IMR-90 (cell line): ENCODE measurements at regions of chr1 and their contacts with region 1.

Region 1: GRCh38 chr1:245512980-245513578 is 358.3 kb downstream of the KIF26B start:
- DNase-seq: no peak
- ATAC-seq: no peak
- H3K4me3 ChIP-seq: no peak overlapping the region
- H3K27ac ChIP-seq: no peak overlapping the region
- H3K4me1 ChIP-seq: peaks cover 2% of the 10 kb centered on the region; the same call in 1 of the 2 replicates
- H3K27me3 ChIP-seq: no peaks in the 10 kb centered on the region
- CTCF ChIP-seq: no peak
- POLR2A ChIP-seq: no peak
- RAD21 ChIP-seq: no peak

Region 2: GRCh38 chr1:245079021-245079609 is 434.0 kb before region 1 on chr1:
- CTCF ChIA-PET with region 1: no interaction called
- POLR2A ChIA-PET with region 1: no interaction called
- dilution Hi-C with region 1: no loop called
- in situ Hi-C with region 1: no loop called
- intact Hi-C with region 1: loop called (anchors 10 kb)
- DNase-seq: peak; percentile 77
- ATAC-seq: peak; percentile 69
- H3K4me3 ChIP-seq: no peak overlapping the region
- H3K27ac ChIP-seq: no peak overlapping the region
- H3K4me1 ChIP-seq: peaks cover 2% of the 10 kb centered on the region; the same call in 1 of the 2 replicates
- H3K27me3 ChIP-seq: no peaks in the 10 kb centered on the region
- CTCF ChIP-seq: peak; percentile 94
- POLR2A ChIP-seq: no peak
- RAD21 ChIP-seq: peak; percentile 92

Region 3: GRCh38 chr1:245546875-245547274 is 33.8 kb after region 1 on chr1:
- CTCF ChIA-PET with region 1: no interaction called
- POLR2A ChIA-PET with region 1: no interaction called
- dilution Hi-C with region 1: no loop called
- in situ Hi-C with region 1: no loop called
- intact Hi-C with region 1: no loop called
- DNase-seq: no peak
- ATAC-seq: no peak
- H3K4me3 ChIP-seq: no peak overlapping the region
- H3K27ac ChIP-seq: no peak overlapping the region
- H3K4me1 ChIP-seq: no peaks in the 10 kb centered on the region
- H3K27me3 ChIP-seq: 0 out of 2 replicates have a peak, but pooled peaks cover 2% of the 10 kb centered on the region
- CTCF ChIP-seq: no peak
- POLR2A ChIP-seq: no peak
- RAD21 ChIP-seq: no peak

Region 4: GRCh38 chr1:245874942-245875580 is 362.0 kb after region 1 on chr1:
- CTCF ChIA-PET with region 1: no interaction called
- POLR2A ChIA-PET with region 1: no interaction called
- dilution Hi-C with region 1: no loop called
- in situ Hi-C with region 1: no loop called
- intact Hi-C with region 1: loop called (anchors 10 kb)
- DNase-seq: peak; percentile 100
- ATAC-seq: peak; percentile 74
- H3K4me3 ChIP-seq: no peak overlapping the region
- H3K27ac ChIP-seq: peak overlapping the region; percentile 91
- H3K4me1 ChIP-seq: peaks cover 45% of the 10 kb centered on the region
- H3K27me3 ChIP-seq: no peaks in the 10 kb centered on the region
- CTCF ChIP-seq: no peak
- POLR2A ChIP-seq: no peak
- RAD21 ChIP-seq: peak; percentile 3; the same call in 1 of the 2 replicates

Region 5: GRCh38 chr1:247487057-247487456 is 1974.0 kb after region 1 on chr1:
- CTCF ChIA-PET with region 1: no interaction called
- POLR2A ChIA-PET with region 1: interaction called, 13 read pairs
- dilution Hi-C with region 1: no loop called
- in situ Hi-C with region 1: no loop called
- intact Hi-C with region 1: no loop called
- DNase-seq: peak; percentile 34
- ATAC-seq: peak; percentile 81
- H3K4me3 ChIP-seq: no peak overlapping the region
- H3K27ac ChIP-seq: no peak overlapping the region
- H3K4me1 ChIP-seq: no peaks in the 10 kb centered on the region
- H3K27me3 ChIP-seq: no peaks in the 10 kb centered on the region
- CTCF ChIP-seq: peak; percentile 47
- POLR2A ChIP-seq: no peak
- RAD21 ChIP-seq: peak; percentile 47